CD4-positive, alpha-beta T cell (primary cell): ENCODE measurements at regions of chr3 and their contacts with region 1.

Region 1: GRCh38 chr3:160413613-160414248 is 14.3 kb downstream of the SMC4 start:
- DNase-seq: peak; percentile 32 to 85 (median 54)
- ATAC-seq: peak; percentile 93
- H3K4me3 ChIP-seq: no peak overlapping the region
- H3K4me3 Mint-ChIP-seq: no peak overlapping the region
- H3K27ac ChIP-seq: no peak overlapping the region
- H3K27ac Mint-ChIP-seq: no peak overlapping the region
- H3K4me1 ChIP-seq: no peaks in the 10 kb centered on the region
- H3K4me1 Mint-ChIP-seq: peaks cover 21% of the 10 kb centered on the region
- H3K27me3 ChIP-seq: no peaks in the 10 kb centered on the region
- H3K27me3 Mint-ChIP-seq: no peaks in the 10 kb centered on the region
- CTCF ChIP-seq: peak; percentile 91

Region 2: GRCh38 chr3:158845765-158846350 is 1567.9 kb before region 1 on chr3:
- CTCF ChIA-PET with region 1: interaction called, 4 read pairs
- POLR2A ChIA-PET with region 1: no interaction called
- intact Hi-C with region 1: loop called (anchors 5 to 10 kb)
- DNase-seq: peak in 8 of 14 experiments; percentile 5 to 64 (median 28)
- ATAC-seq: no peak
- H3K4me3 ChIP-seq: no peak overlapping the region
- H3K4me3 Mint-ChIP-seq: no peak overlapping the region
- H3K27ac ChIP-seq: no peak overlapping the region
- H3K27ac Mint-ChIP-seq: no peak overlapping the region
- H3K4me1 ChIP-seq: peaks cover 3% of the 10 kb centered on the region
- H3K4me1 Mint-ChIP-seq: peaks cover 3% of the 10 kb centered on the region
- H3K27me3 ChIP-seq: no peaks in the 10 kb centered on the region
- H3K27me3 Mint-ChIP-seq: peaks cover 6% of the 10 kb centered on the region
- CTCF ChIP-seq: peak; percentile 93

Region 3: GRCh38 chr3:159828542-159828943 is 585.2 kb before region 1 on chr3:
- CTCF ChIA-PET with region 1: no interaction called
- POLR2A ChIA-PET with region 1: no interaction called
- intact Hi-C with region 1: loop called in 1 of 2 experiments (anchors 2 kb)
- DNase-seq: no peak
- ATAC-seq: no peak
- H3K4me3 ChIP-seq: no peak overlapping the region
- H3K4me3 Mint-ChIP-seq: no peak overlapping the region
- H3K27ac ChIP-seq: no peak overlapping the region
- H3K27ac Mint-ChIP-seq: no peak overlapping the region
- H3K4me1 ChIP-seq: no peaks in the 10 kb centered on the region
- H3K4me1 Mint-ChIP-seq: no peaks in the 10 kb centered on the region
- H3K27me3 ChIP-seq: no peaks in the 10 kb centered on the region
- H3K27me3 Mint-ChIP-seq: peaks cover 5% of the 10 kb centered on the region
- CTCF ChIP-seq: peak; percentile 21

Region 4: GRCh38 chr3:159988617-159989271 is 425.0 kb before region 1 on chr3 and contains the start of gene IL12A:
- CTCF ChIA-PET with region 1: interaction called, 5 read pairs
- POLR2A ChIA-PET with region 1: no interaction called
- intact Hi-C with region 1: loop called (anchors 1 to 2 kb)
- DNase-seq: peak; percentile 68 to 88 (median 74)
- ATAC-seq: peak; percentile 95
- H3K4me3 ChIP-seq: peak within 1 kb of the TSS; percentile 70
- H3K4me3 Mint-ChIP-seq: peak within 1 kb of the TSS; percentile 87
- H3K27ac ChIP-seq: no peak within 1 kb of the TSS
- H3K27ac Mint-ChIP-seq: no peak within 1 kb of the TSS
- H3K4me1 ChIP-seq: peaks cover 20% of the 10 kb centered on the region
- H3K4me1 Mint-ChIP-seq: peaks cover 11% of the 10 kb centered on the region
- H3K27me3 ChIP-seq: no peaks in the 10 kb centered on the region
- H3K27me3 Mint-ChIP-seq: no peaks in the 10 kb centered on the region
- CTCF ChIP-seq: peak; percentile 78
- total RNA-seq, gene IL12A: 0.93 to 1.0 TPM

Region 5: DNA sequence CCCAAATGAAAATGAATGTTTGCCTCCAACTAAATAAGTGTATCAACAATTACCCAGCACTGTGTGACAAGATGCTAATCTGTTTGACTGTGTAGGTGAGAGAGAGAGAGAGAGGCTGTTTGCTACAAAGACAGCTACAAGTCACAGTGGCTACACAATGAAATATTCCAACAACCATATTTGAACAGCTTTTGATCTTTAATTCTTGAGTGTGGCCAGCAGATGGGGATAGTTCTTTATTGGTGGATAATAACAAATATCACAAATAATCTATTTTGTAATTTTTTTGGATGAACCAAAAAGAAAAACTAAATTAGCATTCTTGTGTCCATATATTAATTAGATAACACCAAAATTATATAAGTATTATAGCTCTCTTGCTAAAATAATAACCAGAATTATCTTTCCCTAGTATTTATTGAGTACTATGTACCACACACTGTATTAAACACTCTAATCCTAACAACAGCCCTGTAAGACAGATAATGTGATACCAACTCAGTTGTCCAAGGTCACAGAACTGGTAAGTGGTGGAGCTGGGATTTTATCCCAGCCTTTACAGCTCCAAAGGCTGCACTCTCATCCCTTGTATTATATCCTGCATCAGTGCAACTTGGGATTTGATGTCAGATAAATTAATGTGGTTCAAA is 250.4 kb before region 1 on chr3:
- CTCF ChIA-PET with region 1: interaction called, 5 read pairs
- POLR2A ChIA-PET with region 1: interaction called, 8 read pairs
- intact Hi-C with region 1: loop called (anchors 1 kb)
- DNase-seq: peak in 3 of 14 experiments; percentile 23 to 28 (median 23)
- ATAC-seq: no peak
- H3K4me3 ChIP-seq: no peak overlapping the region
- H3K4me3 Mint-ChIP-seq: no peak overlapping the region
- H3K27ac ChIP-seq: no peak overlapping the region
- H3K27ac Mint-ChIP-seq: no peak overlapping the region
- H3K4me1 ChIP-seq: no peaks in the 10 kb centered on the region
- H3K4me1 Mint-ChIP-seq: no peaks in the 10 kb centered on the region
- H3K27me3 ChIP-seq: no peaks in the 10 kb centered on the region
- H3K27me3 Mint-ChIP-seq: peaks cover 5% of the 10 kb centered on the region
- CTCF ChIP-seq: peak; percentile 47

Region 6: GRCh38 chr3:160399125-160400029 is 14.4 kb before region 1 on chr3 and contains the starts of genes IFT80 and SMC4:
- CTCF ChIA-PET with region 1: interaction called, 15 read pairs
- POLR2A ChIA-PET with region 1: interaction called, 10 read pairs
- intact Hi-C with region 1: no loop called
- DNase-seq: peak; percentile 93 to 98 (median 95)
- ATAC-seq: peak; percentile 95
- H3K4me3 ChIP-seq: peak within 1 kb of the TSS; percentile 89
- H3K4me3 Mint-ChIP-seq: peak within 1 kb of the TSS; percentile 93
- H3K27ac ChIP-seq: peak within 1 kb of the TSS; percentile 84 to 96
- H3K27ac Mint-ChIP-seq: peak within 1 kb of the TSS; percentile 97
- H3K4me1 ChIP-seq: peaks cover 22% of the 10 kb centered on the region
- H3K4me1 Mint-ChIP-seq: peaks cover 58% of the 10 kb centered on the region
- H3K27me3 ChIP-seq: peaks cover 0 to 4% of the 10 kb centered on the region in 2 experiments
- H3K27me3 Mint-ChIP-seq: peaks cover 29% of the 10 kb centered on the region
- CTCF ChIP-seq: no peak
- total RNA-seq, gene IFT80: 16.1 to 18.2 TPM
- total RNA-seq, gene SMC4: 52.3 to 58.8 TPM

Region 7: DNA sequence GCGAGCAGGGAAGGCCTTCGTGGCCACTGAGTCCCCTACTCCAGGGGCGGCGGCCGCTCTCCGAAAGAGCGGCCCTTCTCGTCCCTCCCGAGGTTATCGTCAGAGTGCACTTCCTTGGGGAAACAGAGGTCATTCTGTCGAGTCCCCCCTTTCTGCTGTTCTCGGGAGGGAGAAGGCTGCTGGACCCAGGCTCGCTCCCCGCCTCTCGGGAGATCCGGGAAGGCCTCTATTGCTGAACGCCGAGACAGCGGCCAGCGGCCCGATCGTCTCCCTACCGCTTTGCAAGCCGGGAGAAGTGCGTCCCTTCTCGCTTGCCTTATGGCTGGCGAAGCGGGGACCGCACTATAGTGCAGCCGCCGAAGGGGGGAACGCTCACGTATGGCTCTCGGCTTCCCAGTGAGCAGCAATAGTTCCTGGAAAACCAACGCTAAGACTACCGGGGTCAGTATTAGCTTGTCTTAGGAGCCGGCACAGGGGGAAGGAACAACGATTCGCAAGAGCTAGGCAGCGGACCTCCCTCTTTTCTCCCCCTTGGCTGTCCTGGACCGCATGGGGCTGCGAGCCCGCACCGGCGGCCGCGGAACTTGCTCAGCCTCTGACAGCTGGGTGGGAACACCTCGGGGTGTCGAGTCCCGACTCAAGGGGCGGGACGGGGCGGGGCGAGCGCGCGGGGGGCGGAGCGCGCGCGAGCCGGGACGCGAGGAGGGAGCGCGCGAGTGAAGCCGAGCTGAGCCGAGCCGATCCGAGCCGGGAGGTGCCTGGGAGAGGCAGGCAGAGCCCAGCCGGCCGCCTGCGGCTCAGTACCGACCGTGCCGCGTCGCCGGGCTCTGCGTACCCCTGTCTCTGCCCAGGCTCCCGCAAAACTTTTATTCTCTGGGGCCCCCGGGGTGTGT is 341.4 kb after region 1 on chr3:
- CTCF ChIA-PET with region 1: no interaction called
- POLR2A ChIA-PET with region 1: no interaction called
- intact Hi-C with region 1: loop called in 1 of 2 experiments (anchors 5 kb)
- DNase-seq: peak; percentile 80 to 95 (median 88)
- ATAC-seq: peak; percentile 85
- H3K4me3 ChIP-seq: peak overlapping the region; percentile 93
- H3K4me3 Mint-ChIP-seq: peak overlapping the region; percentile 94
- H3K27ac ChIP-seq: peak overlapping the region; percentile 51 to 81
- H3K27ac Mint-ChIP-seq: peak overlapping the region; percentile 89
- H3K4me1 ChIP-seq: peaks cover 27% of the 10 kb centered on the region
- H3K4me1 Mint-ChIP-seq: peaks cover 42% of the 10 kb centered on the region
- H3K27me3 ChIP-seq: peaks cover 7% of the 10 kb centered on the region in 2 experiments
- H3K27me3 Mint-ChIP-seq: peaks cover 21% of the 10 kb centered on the region
- CTCF ChIP-seq: no peak